Activated CD4-positive, alpha-beta memory T cell treated with anti-CD3 and anti-CD28 coated beads, Interleukin-2, amount 10 ng/mL, durations not matched to agents 7 days and 5 days (primary cell): ENCODE measurements at regions of chr5 and their contacts with region 1.

Region 1: GRCh38 chr5:131270809-131271208 is 7.0 kb downstream of the CDC42SE2 start:
- DNase-seq: no peak
- H3K4me3 Mint-ChIP-seq: peak overlapping the region; percentile 75
- H3K27ac Mint-ChIP-seq: peak overlapping the region; percentile 88
- H3K4me1 Mint-ChIP-seq: peaks cover 76% of the 10 kb centered on the region
- H3K27me3 Mint-ChIP-seq: no peaks in the 10 kb centered on the region

Region 2: GRCh38 chr5:130985776-130986175 is 285.0 kb before region 1 on chr5:
- CTCF ChIA-PET with region 1: no interaction called
- POLR2A ChIA-PET with region 1: no interaction called
- DNase-seq: no peak
- H3K4me3 Mint-ChIP-seq: no peak overlapping the region
- H3K27ac Mint-ChIP-seq: no peak overlapping the region
- H3K4me1 Mint-ChIP-seq: no peaks in the 10 kb centered on the region
- H3K27me3 Mint-ChIP-seq: peaks cover 2% of the 10 kb centered on the region

Region 3: DNA sequence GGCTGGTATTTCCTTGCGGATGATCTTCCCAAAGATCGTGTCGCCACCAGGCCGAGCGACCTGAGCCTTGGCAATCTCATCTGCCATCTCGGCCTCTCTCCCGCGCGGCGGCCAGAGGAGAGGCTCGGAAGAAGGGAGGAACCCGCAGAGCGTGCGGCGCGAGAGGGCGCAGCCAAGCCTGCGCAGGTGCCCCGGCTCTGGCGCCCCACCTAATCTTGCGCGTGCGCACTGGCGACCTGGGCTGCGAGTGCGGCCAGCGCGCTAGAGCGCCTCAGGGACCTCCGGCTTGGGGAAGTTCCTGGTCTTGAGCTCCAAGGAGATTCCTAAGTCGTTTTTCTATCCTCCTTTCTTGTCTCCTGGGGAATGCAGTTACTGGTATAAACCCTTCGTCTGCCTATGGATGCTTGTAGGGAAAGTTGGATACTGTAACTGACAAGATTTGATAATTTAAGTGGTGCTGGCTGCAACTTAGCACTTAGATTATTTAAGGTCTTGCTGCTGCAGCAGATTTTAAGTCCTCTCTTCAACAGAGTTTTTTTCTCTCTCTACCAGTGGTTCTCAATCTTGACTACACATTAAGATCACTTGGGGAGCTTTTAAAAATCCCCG is 105.6 kb before region 1 on chr5 and contains the start of gene HINT1:
- CTCF ChIA-PET with region 1: interaction called, 5 read pairs
- POLR2A ChIA-PET with region 1: interaction called, 128 read pairs
- DNase-seq: peak; percentile 94
- H3K4me3 Mint-ChIP-seq: peak within 1 kb of the TSS; percentile 93
- H3K27ac Mint-ChIP-seq: peak within 1 kb of the TSS; percentile 97
- H3K4me1 Mint-ChIP-seq: peaks cover 59% of the 10 kb centered on the region
- H3K27me3 Mint-ChIP-seq: no peaks in the 10 kb centered on the region
- total RNA-seq, gene HINT1: 323 to 329 TPM

Region 4: DNA sequence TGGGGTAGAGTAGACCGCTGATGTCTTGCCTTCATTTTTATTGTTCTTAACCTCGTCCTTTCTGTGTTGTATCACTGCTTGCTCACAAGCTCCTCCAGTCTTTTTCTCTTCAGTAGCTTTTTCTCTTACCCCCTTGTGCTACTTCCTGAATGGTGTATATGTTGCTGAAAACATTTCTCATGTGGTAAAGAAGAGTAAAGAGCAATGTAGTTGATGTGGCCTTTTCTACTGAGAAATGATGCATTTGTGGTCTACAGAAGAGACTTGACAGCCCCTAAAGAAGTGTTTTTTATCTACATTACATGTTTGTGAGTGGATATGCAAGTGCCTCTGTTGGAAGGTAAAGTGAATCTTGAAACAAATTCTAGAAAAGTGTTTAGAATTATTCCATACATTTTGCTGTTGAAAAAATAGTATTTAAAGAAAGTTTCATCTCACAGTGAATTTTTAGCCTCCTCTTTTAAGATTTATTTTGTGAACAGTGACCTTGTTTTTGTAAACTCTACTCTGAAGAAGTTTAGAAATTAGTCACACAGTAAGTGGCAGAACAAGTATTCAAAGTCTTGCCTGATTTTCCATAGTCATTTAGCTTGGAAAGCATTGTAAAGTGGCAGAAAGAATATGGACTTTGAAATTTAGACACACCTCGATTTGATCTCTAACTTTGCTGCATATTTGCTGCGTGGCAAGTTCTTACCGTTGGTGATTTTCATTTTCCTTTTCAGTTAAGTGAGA is 10.5 kb after region 1 on chr5:
- CTCF ChIA-PET with region 1: interaction called, 34 read pairs
- POLR2A ChIA-PET with region 1: interaction called, 187 read pairs
- DNase-seq: no peak
- H3K4me3 Mint-ChIP-seq: peak overlapping the region; percentile 61
- H3K27ac Mint-ChIP-seq: peak overlapping the region; percentile 87
- H3K4me1 Mint-ChIP-seq: peaks cover 90% of the 10 kb centered on the region
- H3K27me3 Mint-ChIP-seq: no peaks in the 10 kb centered on the region

Region 5: GRCh38 chr5:131289738-131290137 is 18.9 kb after region 1 on chr5:
- CTCF ChIA-PET with region 1: interaction called, 5 read pairs
- POLR2A ChIA-PET with region 1: interaction called, 44 read pairs
- DNase-seq: peak; percentile 40
- H3K4me3 Mint-ChIP-seq: peak overlapping the region; percentile 73
- H3K27ac Mint-ChIP-seq: peak overlapping the region; percentile 93
- H3K4me1 Mint-ChIP-seq: peaks cover 63% of the 10 kb centered on the region
- H3K27me3 Mint-ChIP-seq: no peaks in the 10 kb centered on the region

Region 6: DNA sequence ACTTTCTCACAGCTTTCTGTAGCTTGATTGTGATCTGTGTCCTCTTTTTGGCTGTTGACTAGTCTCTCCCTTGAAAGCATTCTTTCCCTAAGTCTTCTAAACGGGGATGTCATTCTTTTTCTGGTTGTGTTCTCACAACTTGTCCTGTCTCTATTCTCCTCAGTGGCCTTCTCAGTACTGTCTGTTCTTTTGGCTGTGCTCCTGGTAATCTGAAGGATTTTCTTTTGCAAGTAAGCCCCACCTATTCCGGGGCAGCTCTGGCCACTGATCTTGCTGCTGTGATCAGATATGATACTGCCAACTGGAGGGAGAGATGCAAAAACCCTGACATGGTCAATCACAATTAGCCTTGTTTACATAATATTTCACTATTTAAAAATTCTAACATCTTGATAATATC is 165.3 kb after region 1 on chr5:
- CTCF ChIA-PET with region 1: no interaction called
- POLR2A ChIA-PET with region 1: no interaction called
- DNase-seq: no peak
- H3K4me3 Mint-ChIP-seq: no peak overlapping the region
- H3K27ac Mint-ChIP-seq: no peak overlapping the region
- H3K4me1 Mint-ChIP-seq: no peaks in the 10 kb centered on the region
- H3K27me3 Mint-ChIP-seq: no peaks in the 10 kb centered on the region